Vagina (tissue), 2 donors: ENCODE measurements at regions of chrX and their contacts with region 1.

Region 1: GRCh38 chrX:119399772-119400101 is 601 bp downstream of the SLC25A43 start:
- DNase-seq: no peak
- H3K4me3 ChIP-seq: peak overlapping the region; percentile 50 to 68
- H3K27ac ChIP-seq: peak overlapping the region; percentile 66
- H3K4me1 ChIP-seq: no peaks in the 10 kb centered on the region
- H3K27me3 ChIP-seq: no peaks in the 10 kb centered on the region
- CTCF ChIP-seq: no peak
- POLR2A ChIP-seq: no peak

Region 2: DNA sequence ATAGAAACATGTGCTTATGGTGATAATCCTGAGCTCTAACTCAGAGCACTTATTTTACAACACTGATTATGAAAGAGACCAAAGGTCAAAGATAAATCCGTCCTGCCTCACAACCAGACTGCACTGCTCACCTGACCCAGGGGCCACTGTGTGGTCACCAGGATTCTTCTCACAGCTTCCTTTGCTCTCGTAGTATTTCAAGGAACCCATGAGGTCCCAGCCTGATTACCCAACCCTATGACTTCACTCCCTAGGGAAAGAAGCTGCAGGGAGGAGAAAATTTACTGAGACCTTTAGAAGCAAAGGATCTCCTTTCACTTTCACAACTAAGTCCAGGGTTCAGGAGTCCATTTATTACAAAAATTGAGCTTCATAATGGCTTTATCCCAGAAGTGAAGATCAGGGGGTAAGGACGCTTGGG is 78.1 kb after region 1 on chrX:
- intact Hi-C with region 1: loop called (anchors 10 kb)
- DNase-seq: no peak
- H3K4me3 ChIP-seq: no peak overlapping the region
- H3K27ac ChIP-seq: no peak overlapping the region
- H3K4me1 ChIP-seq: peaks cover 5% of the 10 kb centered on the region
- H3K27me3 ChIP-seq: no peaks in the 10 kb centered on the region
- CTCF ChIP-seq: no peak
- POLR2A ChIP-seq: no peak

Region 3: DNA sequence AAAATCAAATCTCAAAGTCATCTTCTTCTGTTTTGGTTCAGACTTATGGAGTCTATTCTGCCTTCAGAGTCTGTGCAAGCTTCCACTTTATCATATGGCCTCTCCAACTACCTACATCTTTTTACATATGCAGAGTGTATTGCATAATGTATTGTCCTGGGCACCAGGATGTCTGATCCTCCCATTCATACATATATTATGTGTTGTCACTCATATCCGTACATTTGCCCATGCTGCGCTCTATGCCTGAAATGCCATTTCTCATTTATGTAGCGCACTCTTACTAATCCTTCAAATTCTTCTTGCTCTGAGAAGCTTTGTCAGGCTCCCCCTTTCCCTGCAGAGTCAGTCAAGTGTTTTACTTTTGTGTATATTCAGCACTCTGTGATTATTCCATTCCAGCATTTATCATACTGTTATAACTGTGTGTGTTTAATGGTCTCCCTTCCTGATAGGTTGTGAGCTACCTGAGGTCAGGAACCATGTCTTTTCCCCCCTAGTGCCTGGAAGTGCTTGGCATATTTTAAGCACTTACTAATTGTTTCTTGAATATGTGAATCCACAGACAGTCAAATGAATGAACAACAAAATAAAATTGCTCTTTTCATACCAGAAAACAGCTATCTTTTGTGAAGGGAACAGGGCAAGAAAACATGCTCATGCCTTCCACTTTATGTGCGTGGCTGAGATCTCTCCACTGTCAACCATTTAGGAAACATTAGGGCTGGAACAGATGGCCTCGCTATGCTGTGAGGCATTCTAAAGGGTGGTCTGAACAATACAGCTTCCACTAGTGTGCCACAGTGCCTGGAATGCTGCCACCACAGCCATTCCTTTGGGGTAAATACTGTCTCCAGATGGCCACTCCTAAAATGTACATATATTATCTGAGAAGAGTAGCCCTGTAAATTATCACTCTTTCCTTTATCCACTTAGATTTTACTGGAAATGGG is 1729.5 kb after region 1 on chrX:
- intact Hi-C with region 1: no loop called
- DNase-seq: no peak
- H3K4me3 ChIP-seq: no peak overlapping the region
- H3K27ac ChIP-seq: no peak overlapping the region
- H3K4me1 ChIP-seq: no peaks in the 10 kb centered on the region
- H3K27me3 ChIP-seq: no peaks in the 10 kb centered on the region
- CTCF ChIP-seq: no peak
- POLR2A ChIP-seq: no peak